ENCODE measurements at regions of chr5 and their contacts with region 1.

Region 1: DNA sequence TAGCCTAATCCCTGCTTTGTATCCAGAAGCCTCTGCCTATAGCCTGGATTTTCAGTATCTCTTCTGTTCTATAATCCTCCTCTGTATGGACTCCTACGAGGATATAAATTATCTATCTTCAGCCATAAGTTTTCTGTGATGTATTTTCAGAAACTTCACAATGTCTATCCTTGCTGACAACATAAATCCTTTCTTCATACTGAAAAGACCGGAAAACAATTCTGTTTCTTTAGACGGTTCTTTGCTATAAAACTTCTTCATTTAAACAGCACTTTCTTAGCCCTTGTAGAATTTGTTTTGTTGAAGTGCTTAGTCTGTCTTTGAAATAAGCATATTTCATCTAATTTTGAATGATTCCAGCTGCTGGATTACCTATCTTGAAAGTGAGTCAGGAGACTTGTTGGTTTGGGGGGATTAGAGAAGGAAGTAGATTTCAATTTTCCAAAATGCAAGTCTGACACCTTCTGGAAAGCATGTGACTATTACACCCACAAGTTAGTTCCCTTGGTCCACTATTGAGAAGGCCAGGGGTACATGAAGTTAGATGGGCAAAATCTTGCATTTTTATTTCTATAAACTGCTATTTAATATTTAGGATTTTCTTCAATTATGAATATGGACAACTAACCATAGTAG is 96.3 kb upstream of the RANBP3L start:
- DNase-seq: no peak
- ATAC-seq: peak in 2 of 8 donors; percentile 41 to 58
- H3K4me3 ChIP-seq: no peak overlapping the region
- H3K27ac ChIP-seq: no peak overlapping the region
- H3K4me1 ChIP-seq: peaks cover 0 to 3% (median 0%) of the 10 kb centered on the region in 9 donors
- H3K27me3 ChIP-seq: no peaks in the 10 kb centered on the region
- CTCF ChIP-seq: peak in 8 of 9 donors; percentile 13 to 59 (median 50)

Region 2: DNA sequence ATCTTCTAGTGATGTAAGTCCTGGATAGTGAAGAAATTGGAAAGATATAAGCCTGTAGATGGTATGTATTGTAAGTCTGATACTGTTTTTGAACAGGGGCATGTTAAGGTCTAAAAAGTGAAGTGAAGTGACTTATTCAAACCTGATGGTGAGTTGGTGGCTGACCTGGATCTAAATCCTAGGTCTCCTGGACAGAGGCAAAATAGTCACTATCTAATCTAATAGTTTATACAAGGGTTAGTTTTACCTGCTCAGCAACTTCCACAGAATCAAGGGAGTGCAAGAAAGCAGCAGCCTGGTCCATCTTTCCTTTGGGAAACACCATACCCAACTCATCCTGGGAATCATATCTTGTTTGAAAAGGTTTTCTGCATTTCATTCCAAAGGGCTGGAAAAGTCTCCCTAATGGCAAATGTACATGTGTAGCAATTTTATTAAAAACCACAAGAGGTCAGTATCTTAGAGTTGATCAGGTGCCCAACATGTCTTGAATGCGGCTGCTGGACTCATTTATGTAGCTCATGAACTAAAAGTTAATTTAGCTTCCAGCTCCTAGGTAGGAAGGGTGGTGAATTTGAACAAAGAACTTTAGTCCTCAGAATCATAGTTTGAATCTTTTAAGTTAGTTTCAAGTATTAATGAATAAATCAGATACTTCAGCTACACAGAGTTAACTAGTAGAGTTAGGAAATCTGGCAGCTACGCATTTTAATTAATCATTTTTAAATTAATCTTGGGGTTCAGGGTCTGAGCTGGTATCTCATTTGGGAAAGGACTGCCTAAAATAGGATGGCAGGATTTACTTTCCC is 220.1 kb before region 1 on chr5:
- intact Hi-C with region 1: loop called in 4 of 10 experiments (anchors 5 to 10 kb)
- DNase-seq: no peak
- ATAC-seq: peak in 3 of 8 donors; percentile 49 to 57 (median 56)
- H3K4me3 ChIP-seq: no peak overlapping the region
- H3K27ac ChIP-seq: no peak overlapping the region
- H3K4me1 ChIP-seq: no peaks in the 10 kb centered on the region
- H3K27me3 ChIP-seq: no peaks in the 10 kb centered on the region
- CTCF ChIP-seq: peak; percentile 27 to 69 (median 59)

Region 3: DNA sequence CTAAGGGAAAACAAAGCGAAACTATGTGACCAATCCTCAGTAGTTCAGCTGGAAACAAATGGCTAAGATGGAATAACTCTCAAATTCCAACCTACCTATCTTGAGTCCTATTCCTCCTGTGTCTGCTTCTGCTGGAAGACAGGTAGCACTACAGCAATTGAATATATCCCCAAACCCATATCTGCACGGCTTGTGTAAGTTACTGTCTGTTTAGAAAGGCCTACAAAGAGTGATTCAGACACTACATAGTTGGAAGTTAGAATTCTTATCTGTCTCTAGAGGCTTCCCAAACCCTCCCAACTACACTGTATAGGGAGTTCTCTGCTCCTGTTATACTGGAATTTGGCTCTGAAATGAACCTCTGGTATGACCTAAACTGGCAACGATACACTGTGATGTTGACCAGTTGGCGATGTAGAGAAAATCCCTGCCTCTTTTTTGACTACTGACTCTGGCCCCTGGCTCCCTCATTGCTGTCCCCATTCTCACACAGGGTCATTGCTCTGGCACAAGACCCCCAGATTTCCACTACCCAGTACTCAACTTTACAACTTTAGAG is 133.7 kb before region 1 on chr5:
- intact Hi-C with region 1: loop called in 8 of 10 experiments (anchors 5 to 10 kb)
- DNase-seq: no peak
- ATAC-seq: no peak
- H3K4me3 ChIP-seq: no peak overlapping the region
- H3K27ac ChIP-seq: no peak overlapping the region
- H3K4me1 ChIP-seq: no peaks in the 10 kb centered on the region
- H3K27me3 ChIP-seq: no peaks in the 10 kb centered on the region
- CTCF ChIP-seq: no peak

Region 4: GRCh38 chr5:36269479-36270219 is 128.4 kb before region 1 on chr5:
- intact Hi-C with region 1: loop called in 8 of 10 experiments (anchors 5 to 10 kb)
- DNase-seq: no peak
- ATAC-seq: no peak
- H3K4me3 ChIP-seq: no peak overlapping the region
- H3K27ac ChIP-seq: no peak overlapping the region
- H3K4me1 ChIP-seq: peaks cover 0 to 7% (median 0%) of the 10 kb centered on the region in 9 donors
- H3K27me3 ChIP-seq: no peaks in the 10 kb centered on the region
- CTCF ChIP-seq: no peak

Region 5: GRCh38 chr5:36438765-36439561 is 40.9 kb after region 1 on chr5:
- intact Hi-C with region 1: no loop called
- DNase-seq: no peak
- ATAC-seq: no peak
- H3K4me3 ChIP-seq: no peak overlapping the region
- H3K27ac ChIP-seq: no peak overlapping the region
- H3K4me1 ChIP-seq: peaks cover 0 to 7% (median 0%) of the 10 kb centered on the region in 9 donors
- H3K27me3 ChIP-seq: no peaks in the 10 kb centered on the region
- CTCF ChIP-seq: no peak

Measured in heart right ventricle (tissue), 16 donors.